ENCODE measurements at regions of chr6 and their contacts with region 1.

Region 1: DNA sequence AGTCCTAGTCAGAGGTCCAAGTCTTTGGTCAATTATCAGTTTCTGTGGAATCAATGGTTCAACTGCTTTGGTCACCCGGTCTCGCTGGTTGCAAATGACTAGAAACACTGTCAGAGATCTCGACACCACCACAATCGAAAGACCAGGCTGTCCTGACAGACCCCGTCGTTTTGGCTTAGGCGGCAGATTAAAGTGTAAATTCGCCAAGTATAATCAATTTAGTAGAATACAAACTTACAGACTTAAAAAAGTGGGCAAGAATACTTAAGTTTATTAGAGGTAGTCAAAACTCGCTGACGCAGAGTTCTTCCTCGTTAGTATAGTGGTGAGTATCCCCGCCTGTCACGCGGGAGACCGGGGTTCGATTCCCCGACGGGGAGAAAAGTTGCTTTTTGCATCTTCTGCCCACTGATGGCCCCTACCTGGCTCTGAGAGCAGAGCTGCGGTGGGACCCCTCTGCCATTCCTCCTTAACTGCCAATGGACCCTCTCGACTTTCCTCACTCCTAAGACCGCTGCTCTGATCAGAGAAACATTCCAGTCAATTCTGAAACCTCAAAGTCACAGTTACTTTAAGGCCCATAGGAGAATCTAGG is 30.6 kb upstream of the ZNF184 start:
- DNase-seq: peak; percentile 74
- H3K4me3 ChIP-seq: peak overlapping the region; percentile 74
- H3K27ac ChIP-seq: peak overlapping the region; percentile 22
- H3K4me1 ChIP-seq: peaks cover 12% of the 10 kb centered on the region
- CTCF ChIP-seq: no peak

Region 2: DNA sequence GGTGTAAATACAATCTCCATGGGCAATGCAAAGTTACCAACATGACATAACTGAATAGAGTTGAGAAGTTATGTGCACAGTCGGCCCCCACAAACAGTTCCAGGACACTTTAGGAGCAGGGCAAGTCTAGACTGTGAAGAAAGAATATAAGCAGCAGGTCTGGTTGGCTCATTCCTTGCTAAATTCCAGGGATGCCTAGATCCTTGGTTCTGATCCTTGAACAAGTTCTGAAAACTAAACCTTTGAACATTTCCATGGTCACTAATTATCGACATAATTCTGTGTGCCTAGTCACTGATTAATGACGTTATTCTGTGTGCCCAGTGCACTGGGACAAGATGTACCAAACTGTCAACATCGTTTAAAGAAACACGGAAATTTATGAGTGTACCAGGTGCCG is 42.8 kb before region 1 on chr6:
- CTCF ChIA-PET with region 1: no interaction called
- POLR2A ChIA-PET with region 1: no interaction called
- intact Hi-C with region 1: no loop called
- DNase-seq: no peak
- H3K4me3 ChIP-seq: no peak overlapping the region
- H3K27ac ChIP-seq: no peak overlapping the region
- H3K4me1 ChIP-seq: no peaks in the 10 kb centered on the region
- CTCF ChIP-seq: no peak

Region 3: GRCh38 chr6:27694545-27694870 is 191.0 kb after region 1 on chr6:
- CTCF ChIA-PET with region 1: no interaction called
- POLR2A ChIA-PET with region 1: no interaction called
- intact Hi-C with region 1: loop called (anchors 5 kb)
- DNase-seq: no peak
- H3K4me3 ChIP-seq: peak overlapping the region; percentile 83
- H3K27ac ChIP-seq: no peak overlapping the region
- H3K4me1 ChIP-seq: peaks cover 6% of the 10 kb centered on the region
- CTCF ChIP-seq: no peak; the same call in 1 of the 2 replicates

Measured in OCI-LY7 (cell line).